ENCODE measurements at regions of chr11 and their contacts with region 1.

Region 1: GRCh38 chr11:72471005-72471898 is 36.9 kb upstream of the CLPB start:
- DNase-seq: peak; percentile 60 to 77 (median 74)
- ATAC-seq: peak; percentile 80 to 86
- H3K4me3 ChIP-seq: no peak overlapping the region
- H3K27ac ChIP-seq: no peak overlapping the region
- H3K4me1 ChIP-seq: no peaks in the 10 kb centered on the region
- H3K27me3 ChIP-seq: no peaks in the 10 kb centered on the region

Region 2: GRCh38 chr11:72683782-72684200 is 212.5 kb after region 1 on chr11:
- intact Hi-C with region 1: loop called in 3 of 4 experiments (anchors 5 to 10 kb)
- DNase-seq: peak; percentile 61 to 87 (median 85)
- ATAC-seq: peak; percentile 47 to 59
- H3K4me3 ChIP-seq: no peak overlapping the region
- H3K27ac ChIP-seq: no peak overlapping the region
- H3K4me1 ChIP-seq: peaks cover 3% of the 10 kb centered on the region
- H3K27me3 ChIP-seq: no peaks in the 10 kb centered on the region

Region 3: DNA sequence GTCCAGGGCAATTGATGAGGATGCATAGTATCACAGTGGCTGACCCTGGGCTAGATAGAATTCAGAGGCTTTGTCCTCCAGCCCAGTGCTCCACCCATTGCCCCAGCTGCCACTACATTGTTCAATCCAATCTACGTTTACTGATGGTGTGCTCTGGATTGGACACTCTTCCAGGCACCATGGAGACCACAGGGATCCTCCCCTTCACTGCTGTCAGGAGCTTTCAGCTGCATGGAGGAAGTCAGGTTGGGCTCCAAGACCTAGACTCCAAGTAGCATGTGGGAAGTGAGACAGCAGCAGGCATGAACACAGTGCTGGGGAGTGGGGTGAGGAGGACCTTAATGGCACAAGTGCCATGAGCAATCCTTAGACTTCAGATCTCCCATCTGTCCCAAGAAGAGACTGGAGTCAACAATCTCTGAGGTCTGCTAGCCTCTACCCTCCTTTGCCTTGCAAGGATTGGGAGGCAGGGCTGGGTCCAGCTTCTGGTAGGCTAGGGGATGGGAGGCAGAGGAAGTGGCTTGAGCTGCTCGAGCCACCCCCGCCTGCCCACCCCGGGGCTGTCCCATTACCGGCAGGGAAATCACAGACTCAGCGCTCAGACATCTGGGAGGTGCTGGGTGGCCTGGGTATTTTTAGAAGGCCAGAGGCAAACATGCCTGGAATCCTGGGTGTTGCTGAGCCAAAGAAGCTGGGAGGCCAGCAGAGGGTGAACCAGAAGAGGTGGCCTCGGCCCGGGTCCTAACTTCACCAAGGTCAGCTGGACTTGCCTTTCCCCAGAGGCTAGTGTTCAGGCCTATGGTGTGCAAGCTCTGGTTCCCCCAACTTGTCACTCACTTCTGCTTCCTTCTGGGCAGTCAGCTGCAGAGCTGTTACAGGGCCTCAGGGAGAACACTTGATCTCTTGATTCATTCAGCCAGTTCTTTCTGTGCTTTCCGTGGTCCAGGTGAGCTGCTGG is 686.1 kb after region 1 on chr11:
- intact Hi-C with region 1: no loop called
- DNase-seq: peak; percentile 40 to 81 (median 76)
- ATAC-seq: peak; percentile 77 to 84
- H3K4me3 ChIP-seq: no peak overlapping the region
- H3K27ac ChIP-seq: peak overlapping the region; percentile 86
- H3K4me1 ChIP-seq: peaks cover 13% of the 10 kb centered on the region
- H3K27me3 ChIP-seq: no peaks in the 10 kb centered on the region